ENCODE measurements at regions of chr1 and their contacts with region 1.

Region 1: GRCh38 chr1:145978854-145979759 is 14.6 kb downstream of the POLR3GL start:
- DNase-seq: peak; percentile 91
- H3K4me3 Mint-ChIP-seq: no peak overlapping the region
- H3K27ac Mint-ChIP-seq: no peak overlapping the region
- H3K4me1 Mint-ChIP-seq: peaks cover 12% of the 10 kb centered on the region
- H3K27me3 Mint-ChIP-seq: no peaks in the 10 kb centered on the region

Region 2: GRCh38 chr1:145804235-145805045 is 174.7 kb before region 1 on chr1:
- CTCF ChIA-PET with region 1: no interaction called
- DNase-seq: no peak
- H3K4me3 Mint-ChIP-seq: no peak overlapping the region
- H3K27ac Mint-ChIP-seq: no peak overlapping the region
- H3K4me1 Mint-ChIP-seq: peaks cover 11% of the 10 kb centered on the region
- H3K27me3 Mint-ChIP-seq: no peaks in the 10 kb centered on the region

Region 3: DNA sequence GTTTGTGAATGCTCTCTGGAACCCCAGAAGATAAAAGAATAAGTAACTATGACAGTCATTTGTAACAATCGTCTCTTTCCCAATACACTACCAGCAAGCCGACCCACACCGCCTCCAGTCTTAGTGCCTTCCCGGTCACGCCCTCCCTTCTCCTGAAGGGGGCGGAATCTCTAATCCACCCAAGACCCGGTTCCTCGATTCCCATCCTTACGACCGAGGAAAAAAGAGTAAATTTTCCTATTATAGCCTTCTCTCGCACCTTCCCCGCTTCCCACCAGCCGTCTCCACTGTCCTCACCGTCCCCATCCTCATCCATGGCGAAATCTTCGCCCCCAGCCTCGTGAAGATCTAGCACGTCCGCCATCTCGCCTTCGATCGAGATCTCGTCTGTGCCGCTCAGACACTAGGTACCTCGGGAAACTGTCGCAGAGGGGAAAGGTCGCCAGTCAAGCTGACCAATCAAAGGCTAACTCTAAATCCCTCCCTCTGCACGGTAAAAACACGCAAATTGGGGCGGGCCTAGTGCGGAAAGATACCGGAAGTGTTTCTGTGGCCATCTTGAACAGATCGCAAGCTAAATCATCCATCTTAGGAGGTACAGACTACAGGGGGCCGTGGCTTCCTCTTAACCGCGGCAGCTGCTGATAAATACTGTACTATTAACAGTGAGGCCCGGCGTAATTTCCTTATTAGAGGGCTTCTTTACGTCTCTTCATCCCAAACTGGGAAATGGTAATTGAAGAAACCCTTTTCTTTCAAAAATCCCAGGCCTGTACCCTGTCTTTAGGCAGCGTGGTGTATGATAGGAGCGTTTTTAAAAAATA is 51.8 kb before region 1 on chr1 and contains the start of gene RBM8A:
- CTCF ChIA-PET with region 1: interaction called, 13 read pairs
- DNase-seq: peak; percentile 97
- H3K4me3 Mint-ChIP-seq: no peak within 1 kb of the TSS
- H3K27ac Mint-ChIP-seq: no peak within 1 kb of the TSS
- H3K4me1 Mint-ChIP-seq: peaks cover 24% of the 10 kb centered on the region
- H3K27me3 Mint-ChIP-seq: no peaks in the 10 kb centered on the region

Region 4: GRCh38 chr1:145957443-145958319 is 21.4 kb before region 1 on chr1 and contains the start of gene LIX1L:
- CTCF ChIA-PET with region 1: interaction called, 13 read pairs
- DNase-seq: peak; percentile 98
- H3K4me3 Mint-ChIP-seq: peak within 1 kb of the TSS; percentile 87
- H3K27ac Mint-ChIP-seq: peak within 1 kb of the TSS; percentile 95
- H3K4me1 Mint-ChIP-seq: peaks cover 77% of the 10 kb centered on the region
- H3K27me3 Mint-ChIP-seq: peaks cover 28% of the 10 kb centered on the region

Region 5: DNA sequence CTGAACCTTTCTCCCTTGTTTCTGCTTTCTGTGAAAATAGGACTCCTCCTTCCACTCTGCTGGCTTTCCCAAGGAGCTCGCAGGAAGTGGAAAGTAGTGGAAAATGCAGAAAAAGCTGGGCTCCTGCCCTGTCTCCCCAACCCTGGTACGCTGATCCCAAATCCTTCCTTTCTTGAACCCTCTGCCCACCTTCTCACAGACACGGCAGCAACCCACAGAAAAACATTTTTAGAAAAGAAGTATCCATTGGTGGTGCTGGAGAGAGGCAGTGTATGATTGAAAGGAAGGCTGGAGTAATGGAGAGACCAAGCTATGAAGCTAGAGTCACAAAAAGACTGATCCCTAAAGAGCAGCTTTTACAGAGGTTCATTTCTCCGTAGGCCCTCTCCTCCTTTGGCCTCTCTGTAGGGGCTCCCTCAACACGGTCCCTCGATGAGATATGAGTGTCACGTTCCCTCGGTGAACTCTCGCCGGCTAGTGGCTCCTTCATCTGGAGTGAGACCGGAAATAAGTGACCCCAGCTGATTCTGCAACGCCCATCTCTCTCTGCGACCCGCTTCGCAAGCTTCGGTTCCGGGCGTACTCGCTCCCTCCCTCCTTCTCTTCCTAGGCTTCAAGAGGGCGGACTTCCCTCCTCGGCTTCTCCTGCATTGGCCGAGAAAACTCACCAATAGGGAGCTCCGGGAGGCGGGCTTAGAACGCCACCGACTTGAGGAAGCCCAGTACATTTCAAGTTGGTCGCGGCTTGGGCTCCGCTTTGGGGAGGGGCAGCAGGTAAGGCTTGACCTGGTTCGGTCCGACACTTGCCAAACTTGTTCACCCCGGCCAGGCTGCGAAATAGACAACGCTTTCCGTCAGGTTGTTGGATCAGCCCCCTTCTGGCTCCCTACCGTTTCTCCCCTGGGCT is 14.9 kb before region 1 on chr1 and contains the starts of genes ANKRD34A and POLR3GL:
- CTCF ChIA-PET with region 1: interaction called, 29 read pairs
- DNase-seq: peak; percentile 97
- H3K4me3 Mint-ChIP-seq: peak within 1 kb of the TSS; percentile 87
- H3K27ac Mint-ChIP-seq: peak within 1 kb of the TSS; percentile 93
- H3K4me1 Mint-ChIP-seq: peaks cover 55% of the 10 kb centered on the region
- H3K27me3 Mint-ChIP-seq: peaks cover 27% of the 10 kb centered on the region

Region 6: GRCh38 chr1:145996433-145997015 is 17.4 kb after region 1 on chr1 and contains the start of gene TXNIP:
- CTCF ChIA-PET with region 1: interaction called, 132 read pairs
- DNase-seq: peak; percentile 98
- H3K4me3 Mint-ChIP-seq: peak within 1 kb of the TSS; percentile 97
- H3K27ac Mint-ChIP-seq: peak within 1 kb of the TSS; percentile 99
- H3K4me1 Mint-ChIP-seq: peaks cover 60% of the 10 kb centered on the region
- H3K27me3 Mint-ChIP-seq: no peaks in the 10 kb centered on the region

Region 7: DNA sequence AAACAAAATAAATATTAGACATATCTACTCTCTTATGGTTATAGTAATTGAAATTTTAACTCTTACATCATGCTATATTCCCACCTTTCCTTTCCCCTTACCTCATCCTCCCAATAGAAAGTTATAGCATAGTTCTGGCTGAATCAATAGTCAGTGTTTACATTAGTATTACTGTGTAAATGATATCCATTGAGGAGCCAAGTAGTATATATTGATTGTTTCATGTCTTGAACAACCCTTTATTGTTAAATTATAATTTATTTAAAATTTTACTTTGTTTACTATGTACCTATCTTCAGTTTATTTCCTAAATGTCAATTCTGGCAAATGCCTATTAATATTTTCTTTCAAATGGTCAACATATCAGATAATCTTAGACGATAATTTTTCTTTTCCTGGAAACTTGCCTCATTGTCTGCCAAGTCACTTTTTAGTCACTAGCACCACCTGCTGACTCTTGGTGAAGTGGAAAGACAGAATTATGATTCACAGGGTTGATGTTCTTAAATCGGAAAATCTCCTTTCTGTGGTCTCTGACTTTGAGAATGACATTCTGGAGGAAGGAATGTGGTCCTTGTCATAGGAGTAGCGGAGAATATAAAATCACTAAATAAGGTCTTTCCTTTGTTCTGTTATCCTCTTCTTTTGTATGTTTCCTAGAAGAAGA is 33.8 kb after region 1 on chr1:
- CTCF ChIA-PET with region 1: interaction called, 154 read pairs
- DNase-seq: peak; percentile 75
- H3K4me3 Mint-ChIP-seq: no peak overlapping the region
- H3K27ac Mint-ChIP-seq: no peak overlapping the region
- H3K4me1 Mint-ChIP-seq: peaks cover 17% of the 10 kb centered on the region
- H3K27me3 Mint-ChIP-seq: peaks cover 26% of the 10 kb centered on the region

Region 8: DNA sequence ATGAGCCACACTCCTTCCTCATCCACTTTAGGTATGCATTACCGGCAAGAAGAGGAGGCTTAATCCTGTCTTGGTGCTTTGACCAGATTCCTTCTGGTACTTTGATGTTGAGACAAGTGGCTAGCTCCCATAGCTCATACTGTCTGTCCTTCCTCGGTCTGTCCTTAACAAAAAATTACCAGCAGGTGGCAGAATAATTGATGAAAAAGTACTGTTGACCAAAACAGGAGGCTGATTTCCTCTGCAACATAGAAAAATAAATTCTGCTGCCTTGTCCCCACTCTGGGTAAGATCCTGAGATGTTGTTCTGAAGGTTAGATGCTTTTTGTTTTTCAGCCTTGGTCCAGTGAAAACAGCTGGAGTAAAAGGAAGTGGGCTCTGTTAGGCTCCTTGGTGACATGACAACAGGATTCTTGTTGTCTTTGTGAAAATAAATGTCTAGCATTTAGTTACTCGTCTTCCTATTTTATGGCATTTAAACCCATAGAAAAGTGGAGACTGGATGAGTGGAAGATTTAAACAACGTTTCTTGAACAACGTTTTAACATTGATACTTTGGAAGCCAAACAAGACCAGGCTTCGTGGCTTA is 53.6 kb after region 1 on chr1:
- CTCF ChIA-PET with region 1: interaction called, 26 read pairs
- DNase-seq: no peak
- H3K4me3 Mint-ChIP-seq: no peak overlapping the region
- H3K27ac Mint-ChIP-seq: no peak overlapping the region
- H3K4me1 Mint-ChIP-seq: peaks cover 36% of the 10 kb centered on the region
- H3K27me3 Mint-ChIP-seq: peaks cover 25% of the 10 kb centered on the region

Measured in activated naive CD4-positive, alpha-beta T cell treated with anti-CD3 and anti-CD28 coated beads, Interleukin-2, amount 10 ng/mL, durations not matched to agents 7 days and 5 days (primary cell).